Activated naive CD4-positive, alpha-beta T cell treated with anti-CD3 and anti-CD28 coated beads for 36 hours (primary cell): ENCODE measurements at regions of chr10 and their contacts with region 1.

Region 1: GRCh38 chr10:106672517-106673175 is 491.9 kb downstream of the SORCS1 start:
- DNase-seq: no peak
- H3K4me3 Mint-ChIP-seq: no peak overlapping the region
- H3K27ac Mint-ChIP-seq: no peak overlapping the region
- H3K4me1 Mint-ChIP-seq: no peaks in the 10 kb centered on the region
- H3K27me3 Mint-ChIP-seq: no peaks in the 10 kb centered on the region

Region 2: GRCh38 chr10:106636766-106637491 is 35.7 kb before region 1 on chr10:
- CTCF ChIA-PET with region 1: interaction called, 10 read pairs
- intact Hi-C with region 1: no loop called
- DNase-seq: no peak
- H3K4me3 Mint-ChIP-seq: no peak overlapping the region
- H3K27ac Mint-ChIP-seq: no peak overlapping the region
- H3K4me1 Mint-ChIP-seq: no peaks in the 10 kb centered on the region
- H3K27me3 Mint-ChIP-seq: no peaks in the 10 kb centered on the region